ENCODE measurements at regions of chr14 and their contacts with region 1.

Region 1: DNA sequence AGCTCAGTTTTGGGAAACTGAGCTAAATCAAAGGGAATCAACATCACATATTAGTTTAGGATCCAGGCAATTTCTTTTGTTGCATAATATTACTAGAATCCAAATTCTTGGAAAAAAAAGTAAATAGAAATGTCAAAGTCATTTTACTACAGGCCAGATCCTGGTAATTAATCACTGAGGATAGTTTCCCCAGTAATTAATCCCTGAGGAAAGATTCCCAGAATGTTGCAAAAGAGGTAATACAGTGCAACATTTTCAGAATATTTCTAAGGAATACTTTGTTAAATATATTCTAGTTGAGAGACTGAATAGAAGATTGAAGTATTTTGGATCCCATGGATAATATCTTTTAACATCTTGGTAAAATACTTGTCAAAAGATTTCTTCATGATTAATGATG is 207.0 kb upstream of the GARIN2 start:
- DNase-seq: no peak
- H3K4me3 ChIP-seq: no peak overlapping the region
- H3K27ac ChIP-seq: no peak overlapping the region
- H3K4me1 ChIP-seq: no peaks in the 10 kb centered on the region
- H3K27me3 ChIP-seq: no peaks in the 10 kb centered on the region
- CTCF ChIP-seq: no peak
- EP300 ChIP-seq: no peak
- POLR2A ChIP-seq: no peak

Region 2: GRCh38 chr14:66998013-66998412 is 15.8 kb after region 1 on chr14:
- intact Hi-C with region 1: loop called in 1 of 4 experiments (anchors 2 kb)
- DNase-seq: no peak
- H3K4me3 ChIP-seq: no peak overlapping the region
- H3K27ac ChIP-seq: no peak overlapping the region
- H3K4me1 ChIP-seq: no peaks in the 10 kb centered on the region
- H3K27me3 ChIP-seq: no peaks in the 10 kb centered on the region
- CTCF ChIP-seq: no peak
- EP300 ChIP-seq: no peak
- POLR2A ChIP-seq: no peak